Heart left ventricle (tissue), 16 donors: ENCODE measurements at regions of chr18 and their contacts with region 1.

Region 1: GRCh38 chr18:46829947-46830346 is 73.1 kb upstream of the ST8SIA5 start:
- DNase-seq: no peak
- ATAC-seq: no peak
- H3K4me3 ChIP-seq: no peak overlapping the region
- H3K27ac ChIP-seq: no peak overlapping the region
- H3K4me1 ChIP-seq: peaks cover 0 to 5% (median 0%) of the 10 kb centered on the region in 12 donors
- H3K27me3 ChIP-seq: no peaks in the 10 kb centered on the region
- CTCF ChIP-seq: peak in 1 of 12 donors; percentile 15
- POLR2A ChIP-seq: no peak

Region 2: DNA sequence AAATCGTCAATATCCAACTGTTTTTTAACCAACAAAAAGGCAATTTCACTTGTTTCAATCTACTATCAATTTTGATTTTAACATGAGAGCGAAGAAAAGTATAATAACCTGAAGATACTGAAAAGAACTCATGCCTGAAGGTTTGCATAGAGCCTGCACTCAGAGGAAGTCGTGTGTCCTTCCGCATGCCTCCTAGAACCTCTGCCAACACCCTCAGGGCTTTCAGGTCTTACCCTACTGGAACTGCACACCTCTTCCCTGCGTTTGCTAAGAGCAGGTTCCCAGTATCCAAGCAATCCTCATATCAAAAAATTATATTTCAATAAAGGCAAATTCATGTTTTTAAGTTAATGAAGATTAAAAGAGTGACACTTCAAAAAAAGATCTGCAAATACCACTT is 12.6 kb after region 1 on chr18:
- intact Hi-C with region 1: loop called in 1 of 10 experiments (anchors 2 kb)
- DNase-seq: no peak
- ATAC-seq: no peak
- H3K4me3 ChIP-seq: no peak overlapping the region
- H3K27ac ChIP-seq: no peak overlapping the region
- H3K4me1 ChIP-seq: peaks cover 0 to 3% (median 0%) of the 10 kb centered on the region in 12 donors
- H3K27me3 ChIP-seq: no peaks in the 10 kb centered on the region
- CTCF ChIP-seq: no peak
- POLR2A ChIP-seq: no peak